Mammary epithelial cell (primary cell): ENCODE measurements at regions of chr16 and their contacts with region 1.

Region 1: GRCh38 chr16:48054881-48055601 is 100.8 kb downstream of the ABCC12 start:
- DNase-seq: peak; percentile 41
- H3K4me3 ChIP-seq: no peak overlapping the region
- H3K27ac ChIP-seq: no peak overlapping the region
- H3K4me1 ChIP-seq: peaks cover 13% of the 10 kb centered on the region
- H3K27me3 ChIP-seq: no peaks in the 10 kb centered on the region
- CTCF ChIP-seq: peak; percentile 96 to 98

Region 2: DNA sequence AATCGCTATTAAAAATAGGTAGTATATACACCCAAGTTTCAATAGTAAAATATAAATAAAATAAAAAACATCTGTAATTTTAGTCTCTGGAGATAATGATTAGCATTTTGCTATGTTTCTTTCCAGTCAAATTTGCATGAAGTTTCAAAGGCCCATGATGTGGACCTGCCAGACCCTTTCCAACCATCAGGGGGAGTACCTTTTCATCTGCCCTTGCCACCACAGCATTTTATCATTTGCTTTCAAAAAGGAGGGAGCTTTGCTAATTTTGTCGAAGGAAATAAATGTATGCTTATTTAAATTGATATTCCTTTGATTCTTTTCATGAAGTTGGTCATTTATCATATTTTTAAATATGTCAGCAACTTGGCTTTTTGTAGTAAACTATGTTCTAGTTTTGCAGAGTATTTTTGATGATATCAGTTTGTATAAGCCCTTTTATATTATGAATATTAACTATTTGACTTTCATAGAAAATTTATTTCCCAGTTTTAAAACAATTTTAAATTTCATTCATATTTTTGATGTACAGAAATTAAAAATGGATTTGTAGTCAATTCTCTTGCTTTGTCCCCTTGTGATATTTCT is 796.1 kb before region 1 on chr16:
- CTCF ChIA-PET with region 1: interaction called, 3 read pairs
- dilution Hi-C with region 1: no loop called
- in situ Hi-C with region 1: no loop called
- intact Hi-C with region 1: loop called (anchors 2 kb)
- DNase-seq: peak; percentile 3
- H3K4me3 ChIP-seq: no peak overlapping the region
- H3K27ac ChIP-seq: no peak overlapping the region
- H3K4me1 ChIP-seq: no peaks in the 10 kb centered on the region
- H3K27me3 ChIP-seq: no peaks in the 10 kb centered on the region
- CTCF ChIP-seq: peak; percentile 68 to 79

Region 3: DNA sequence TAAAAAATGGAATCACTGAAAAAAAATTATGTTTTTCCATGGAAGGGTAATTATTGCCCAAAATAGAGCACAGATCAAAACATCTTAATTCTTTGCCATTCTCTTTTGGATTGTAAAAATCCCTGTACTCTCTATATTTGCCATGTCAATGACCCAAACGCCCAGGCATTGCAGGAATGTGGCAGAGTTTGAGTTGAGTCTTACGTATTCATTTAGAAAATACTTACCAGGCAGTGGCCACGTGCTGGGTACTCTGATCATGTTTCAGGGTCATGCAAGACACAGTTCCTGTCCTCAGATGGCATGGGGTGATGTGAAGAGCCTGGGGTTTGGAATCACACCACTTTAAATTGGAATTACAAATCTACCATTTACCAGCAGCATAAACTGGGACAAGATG is 166.9 kb before region 1 on chr16:
- CTCF ChIA-PET with region 1: no interaction called
- dilution Hi-C with region 1: no loop called
- in situ Hi-C with region 1: no loop called
- intact Hi-C with region 1: loop called (anchors 5 kb)
- DNase-seq: peak; percentile 40
- H3K4me3 ChIP-seq: no peak overlapping the region
- H3K27ac ChIP-seq: peak overlapping the region; percentile 66
- H3K4me1 ChIP-seq: peaks cover 35% of the 10 kb centered on the region
- H3K27me3 ChIP-seq: no peaks in the 10 kb centered on the region
- CTCF ChIP-seq: no peak

Region 4: DNA sequence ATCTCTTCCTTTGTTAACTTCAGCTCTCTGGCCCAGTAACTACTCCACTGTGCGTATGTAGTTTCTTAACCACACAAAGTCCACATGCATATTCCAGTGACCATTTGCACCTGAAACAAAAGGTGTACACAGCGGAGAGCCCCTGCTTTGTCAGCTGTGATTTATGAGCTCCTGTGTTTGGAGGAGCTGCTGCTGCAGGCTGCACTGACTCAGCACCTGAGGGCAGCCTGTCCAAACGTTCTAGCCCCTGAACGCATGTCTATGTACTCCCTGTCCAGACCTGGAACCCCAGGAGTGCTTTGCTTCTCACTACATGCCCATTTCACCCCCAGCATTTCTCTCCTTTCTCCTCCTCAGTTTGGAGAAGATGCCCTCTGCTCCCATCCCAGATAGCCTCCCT is 115.4 kb before region 1 on chr16:
- CTCF ChIA-PET with region 1: interaction called, 3 read pairs
- dilution Hi-C with region 1: no loop called
- in situ Hi-C with region 1: no loop called
- intact Hi-C with region 1: loop called (anchors 2 kb)
- DNase-seq: peak; percentile 41
- H3K4me3 ChIP-seq: no peak overlapping the region
- H3K27ac ChIP-seq: no peak overlapping the region
- H3K4me1 ChIP-seq: no peaks in the 10 kb centered on the region
- H3K27me3 ChIP-seq: no peaks in the 10 kb centered on the region
- CTCF ChIP-seq: peak in 1 of 2 donors; percentile 38

Region 5: DNA sequence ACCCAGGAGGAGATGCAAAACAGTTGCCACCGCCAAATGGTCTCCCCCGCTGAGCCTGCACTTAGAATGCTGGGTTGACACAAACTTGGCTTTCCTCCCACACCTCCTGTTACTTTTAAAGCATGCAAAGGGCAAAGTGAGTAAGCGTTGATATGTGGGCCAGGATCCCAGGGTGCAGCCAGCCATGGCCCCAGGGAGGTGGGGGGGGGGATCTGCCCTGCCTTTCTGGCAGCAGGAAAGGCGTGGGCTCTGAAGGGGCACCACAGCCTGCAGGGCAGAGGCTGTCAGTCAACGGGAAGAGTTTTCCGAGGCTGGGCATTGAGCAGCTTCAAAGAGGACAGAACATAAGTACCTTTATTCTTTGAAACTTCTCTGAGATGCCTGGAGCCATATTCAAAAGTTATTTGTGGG is 41.5 kb before region 1 on chr16:
- CTCF ChIA-PET with region 1: no interaction called
- dilution Hi-C with region 1: no loop called
- in situ Hi-C with region 1: no loop called
- intact Hi-C with region 1: no loop called
- DNase-seq: peak; percentile 90
- H3K4me3 ChIP-seq: no peak overlapping the region
- H3K27ac ChIP-seq: peak overlapping the region; percentile 48
- H3K4me1 ChIP-seq: peaks cover 20% of the 10 kb centered on the region
- H3K27me3 ChIP-seq: no peaks in the 10 kb centered on the region
- CTCF ChIP-seq: no peak